A673 (cell line): ENCODE measurements at regions of chr14 and their contacts with region 1.

Region 1: DNA sequence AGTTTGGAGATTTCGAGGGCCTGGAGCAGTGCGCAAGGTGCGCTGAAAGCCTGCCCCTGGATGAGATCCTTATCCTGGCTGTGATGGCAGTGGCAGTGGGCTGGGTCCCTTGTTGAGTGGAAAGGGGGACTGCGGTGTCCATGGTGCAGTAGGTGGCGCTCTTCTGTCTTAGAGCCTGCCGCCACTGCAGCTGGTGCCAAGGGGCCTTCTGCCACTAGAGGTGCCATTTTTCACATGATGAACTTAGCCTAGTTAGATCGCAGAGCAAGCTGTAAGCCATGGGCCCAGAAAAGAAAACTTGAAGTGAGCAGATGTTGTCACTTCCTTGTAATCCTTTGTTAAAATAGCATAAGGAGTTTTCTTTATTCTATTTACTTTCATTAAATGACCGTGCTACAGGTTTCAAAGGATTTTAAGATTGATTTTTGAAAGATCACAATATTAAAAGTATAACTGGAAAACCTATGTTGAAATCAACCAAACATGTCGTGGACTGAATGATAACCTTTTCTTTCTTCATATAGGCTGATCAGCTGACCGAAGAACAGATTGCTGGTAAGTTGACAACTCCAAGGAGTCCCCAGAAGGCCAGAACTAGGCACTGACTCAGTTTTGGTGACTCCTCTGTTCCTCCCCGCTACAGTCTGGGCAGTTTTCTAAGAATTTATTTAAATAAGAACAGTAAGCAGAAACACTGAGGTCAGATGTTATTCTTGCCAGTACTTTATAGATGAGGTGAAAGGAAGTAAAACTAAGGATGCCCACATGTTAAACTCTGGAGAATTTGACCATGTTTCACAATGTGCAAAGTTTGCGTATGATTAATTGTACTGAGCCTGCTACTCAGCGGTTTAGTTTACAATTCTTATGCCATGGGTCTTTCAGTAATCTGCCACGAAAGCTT is 3.0 kb downstream of the CALM1 start:
- DNase-seq: peak; percentile 96
- H3K4me3 ChIP-seq: peak overlapping the region; percentile 90
- H3K27ac ChIP-seq: peak overlapping the region; percentile 63
- H3K4me1 ChIP-seq: peaks cover 61% of the 10 kb centered on the region
- H3K27me3 ChIP-seq: no peaks in the 10 kb centered on the region
- CTCF ChIP-seq: peak; percentile 100

Region 2: DNA sequence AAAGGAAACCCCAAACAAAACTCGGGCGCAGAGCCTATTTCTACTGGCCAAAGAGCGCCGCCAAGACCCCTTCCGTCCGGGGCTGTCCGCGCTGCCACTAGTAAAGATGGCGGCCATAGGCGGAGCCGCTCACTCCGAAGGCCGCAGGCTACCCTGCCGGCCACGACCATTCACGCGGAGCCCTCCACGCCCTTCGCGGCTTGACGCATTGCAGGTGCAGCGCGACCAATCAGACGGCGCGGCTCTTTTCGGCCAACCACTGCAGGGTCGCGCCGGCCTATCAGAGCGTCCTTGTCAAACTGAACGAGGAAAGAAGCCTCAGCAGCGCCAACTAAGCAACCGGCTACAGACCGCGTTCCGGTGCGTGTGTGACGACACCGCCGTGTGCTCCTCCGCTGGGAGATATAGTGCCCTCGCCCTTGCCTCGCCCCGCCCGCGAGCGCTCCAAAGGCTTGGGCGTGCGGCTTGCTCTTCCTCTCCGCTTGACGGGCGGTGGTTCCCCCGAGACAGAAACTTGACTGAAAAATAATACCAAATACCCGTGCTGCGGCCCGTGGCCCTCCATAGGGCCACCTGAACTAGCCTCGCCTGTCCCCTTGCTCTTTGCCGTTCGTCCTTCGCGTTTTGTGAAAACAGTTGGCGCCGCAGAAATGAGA is 16.6 kb before region 1 on chr14:
- CTCF ChIA-PET with region 1: no interaction called
- POLR2A ChIA-PET with region 1: no interaction called
- intact Hi-C with region 1: loop called (anchors 2 kb)
- DNase-seq: peak; percentile 99
- H3K4me3 ChIP-seq: peak overlapping the region; percentile 60
- H3K27ac ChIP-seq: peak overlapping the region; percentile 98
- H3K4me1 ChIP-seq: peaks cover 21% of the 10 kb centered on the region
- H3K27me3 ChIP-seq: no peaks in the 10 kb centered on the region
- CTCF ChIP-seq: no peak

Region 3: GRCh38 chr14:90518941-90519256 is 119.1 kb after region 1 on chr14:
- CTCF ChIA-PET with region 1: interaction called, 3 read pairs
- POLR2A ChIA-PET with region 1: no interaction called
- intact Hi-C with region 1: loop called (anchors 5 kb)
- DNase-seq: peak; percentile 49
- H3K4me3 ChIP-seq: no peak overlapping the region
- H3K27ac ChIP-seq: no peak overlapping the region
- H3K4me1 ChIP-seq: peaks cover 10% of the 10 kb centered on the region
- H3K27me3 ChIP-seq: no peaks in the 10 kb centered on the region
- CTCF ChIP-seq: peak; percentile 64

Region 4: DNA sequence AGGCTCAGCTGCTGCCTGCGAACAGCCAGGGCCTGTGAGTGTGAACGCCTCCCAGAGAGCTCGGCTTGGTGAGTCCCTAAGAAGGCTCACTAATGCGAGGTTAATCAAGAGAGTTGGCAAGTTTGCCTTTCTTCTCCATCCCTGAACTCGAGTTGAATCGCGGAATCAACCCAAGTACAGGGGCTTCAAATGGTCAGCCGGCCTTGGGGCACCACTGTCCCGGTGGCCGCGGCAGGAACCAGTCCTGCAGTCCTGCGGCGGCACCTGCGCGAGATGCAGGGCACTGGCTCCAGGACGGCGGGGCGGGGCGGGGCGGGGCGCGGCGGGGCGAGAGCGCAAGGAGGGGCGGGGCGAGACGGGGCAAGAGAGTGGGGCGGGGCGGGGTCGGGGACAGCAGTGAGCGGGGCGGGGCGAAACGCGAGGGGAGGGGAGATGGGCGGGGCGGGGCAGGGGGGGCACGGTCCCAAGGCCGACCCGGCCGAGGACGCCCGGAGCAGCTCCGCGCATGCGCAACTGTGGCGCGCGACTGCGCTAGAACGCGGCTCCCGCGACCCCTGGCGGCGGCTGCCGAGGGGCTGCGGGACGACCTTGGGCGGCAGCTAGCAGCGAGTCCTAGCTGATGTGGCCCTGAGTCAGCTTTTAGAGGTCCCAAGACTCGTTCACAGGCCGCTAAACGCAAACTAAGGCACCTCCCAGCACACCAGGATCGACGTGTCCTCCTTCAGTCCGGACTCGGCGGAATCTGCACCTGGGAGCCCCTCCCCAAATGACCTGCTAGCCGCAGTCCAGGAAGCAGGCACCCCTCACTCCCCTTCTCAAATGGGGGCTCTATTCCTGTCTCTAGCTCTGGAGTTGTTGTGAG is 358.5 kb after region 1 on chr14:
- CTCF ChIA-PET with region 1: interaction called, 17 read pairs
- POLR2A ChIA-PET with region 1: no interaction called
- intact Hi-C with region 1: loop called (anchors 1 kb)
- DNase-seq: peak; percentile 93
- H3K4me3 ChIP-seq: peak overlapping the region; percentile 45
- H3K27ac ChIP-seq: peak overlapping the region; percentile 75
- H3K4me1 ChIP-seq: peaks cover 23% of the 10 kb centered on the region
- H3K27me3 ChIP-seq: no peaks in the 10 kb centered on the region
- CTCF ChIP-seq: peak; percentile 80